ENCODE measurements at regions of chr12 and their contacts with region 1.

Region 1: DNA sequence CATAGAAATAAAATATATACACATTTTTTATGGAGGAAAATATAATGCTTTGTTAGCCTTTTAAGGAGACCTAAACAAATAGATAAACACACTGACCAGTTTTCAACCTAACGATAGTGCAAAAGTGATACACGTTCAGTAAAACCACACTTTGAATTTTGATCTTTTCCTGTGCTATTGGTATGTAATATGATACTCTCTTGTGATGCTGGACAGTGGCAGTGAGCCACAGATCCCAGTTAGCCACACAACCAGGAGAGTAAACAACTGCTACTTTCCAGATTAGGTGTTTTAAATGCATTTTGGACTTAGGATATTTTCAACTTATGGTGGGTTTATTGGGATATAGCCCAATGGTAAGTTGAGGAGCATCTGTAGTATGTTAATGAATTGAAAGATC is 243.1 kb downstream of the ERC1 start:
- DNase-seq: no peak
- H3K4me3 ChIP-seq: no peak overlapping the region
- H3K27ac ChIP-seq: no peak overlapping the region
- H3K4me1 ChIP-seq: no peaks in the 10 kb centered on the region
- H3K27me3 ChIP-seq: no peaks in the 10 kb centered on the region
- CTCF ChIP-seq: no peak

Region 2: DNA sequence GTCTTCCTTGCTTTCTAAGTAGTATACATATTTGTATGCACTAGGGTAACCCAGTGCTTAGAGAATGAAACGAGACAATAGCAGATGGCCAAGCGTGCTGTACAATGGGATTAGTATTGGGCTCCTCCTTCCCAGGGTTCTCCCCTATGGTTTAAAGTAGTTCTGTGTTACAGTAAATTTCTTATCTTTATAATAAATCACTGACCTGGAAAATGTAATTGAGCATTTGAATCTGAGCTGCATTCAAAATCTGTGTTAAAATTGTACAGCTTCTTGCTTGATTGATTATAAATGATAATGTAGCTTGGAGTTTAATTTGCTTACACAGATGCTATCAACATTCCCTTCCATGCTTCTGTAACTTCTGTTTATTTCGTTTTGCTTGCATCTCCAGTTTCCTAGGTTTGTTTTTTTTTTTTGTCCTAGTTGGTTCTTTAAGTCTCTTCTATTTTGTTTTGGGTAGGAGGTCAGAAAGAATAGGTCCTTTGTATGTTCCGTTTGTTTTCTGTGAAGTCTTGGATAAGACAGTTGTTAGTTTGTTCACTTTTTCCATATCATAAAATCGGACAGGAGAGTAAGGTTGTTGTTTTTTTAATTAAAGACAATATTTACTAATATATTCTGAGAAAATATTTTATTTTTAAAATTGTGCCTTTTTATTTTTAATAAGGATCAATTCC is 71.9 kb before region 1 on chr12:
- intact Hi-C with region 1: no loop called
- DNase-seq: no peak
- H3K4me3 ChIP-seq: no peak overlapping the region
- H3K27ac ChIP-seq: no peak overlapping the region
- H3K4me1 ChIP-seq: no peaks in the 10 kb centered on the region
- H3K27me3 ChIP-seq: no peaks in the 10 kb centered on the region
- CTCF ChIP-seq: no peak

Region 3: DNA sequence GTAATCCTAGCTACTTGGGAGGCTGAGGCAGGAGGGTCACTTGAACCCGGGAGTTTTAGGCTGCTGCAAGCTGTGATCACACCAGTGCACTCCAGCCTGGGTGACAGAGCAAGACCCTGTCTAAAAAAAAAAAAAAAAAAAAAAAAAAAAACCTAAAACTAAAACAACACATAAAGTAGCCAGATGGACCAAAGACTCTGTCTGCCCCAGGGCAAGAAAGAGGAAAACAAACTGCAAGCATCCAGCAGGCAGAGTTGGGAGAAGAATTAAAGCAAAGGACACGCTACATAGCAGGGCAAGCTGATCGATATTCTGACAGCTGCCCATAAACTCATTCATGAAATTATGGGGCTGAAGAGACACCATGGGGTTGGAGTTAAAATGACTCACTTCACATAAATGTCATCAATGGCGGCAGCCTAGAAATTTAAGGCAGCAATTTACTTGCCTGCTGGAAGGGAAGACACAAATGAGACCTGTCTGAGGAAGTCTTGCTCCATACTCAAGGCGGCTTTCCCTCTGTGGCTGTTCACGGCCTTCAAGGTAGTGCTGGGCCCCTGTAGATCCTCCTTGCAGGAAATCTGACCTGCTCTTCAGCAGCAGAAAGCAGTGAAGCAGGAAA is 1301.6 kb after region 1 on chr12:
- intact Hi-C with region 1: loop called (anchors 10 kb)
- DNase-seq: no peak
- H3K4me3 ChIP-seq: no peak overlapping the region
- H3K27ac ChIP-seq: no peak overlapping the region
- H3K4me1 ChIP-seq: no peaks in the 10 kb centered on the region
- H3K27me3 ChIP-seq: no peaks in the 10 kb centered on the region
- CTCF ChIP-seq: no peak